GM13977 (cell line): ENCODE measurements at regions of chr10 and their contacts with region 1.

Region 1: DNA sequence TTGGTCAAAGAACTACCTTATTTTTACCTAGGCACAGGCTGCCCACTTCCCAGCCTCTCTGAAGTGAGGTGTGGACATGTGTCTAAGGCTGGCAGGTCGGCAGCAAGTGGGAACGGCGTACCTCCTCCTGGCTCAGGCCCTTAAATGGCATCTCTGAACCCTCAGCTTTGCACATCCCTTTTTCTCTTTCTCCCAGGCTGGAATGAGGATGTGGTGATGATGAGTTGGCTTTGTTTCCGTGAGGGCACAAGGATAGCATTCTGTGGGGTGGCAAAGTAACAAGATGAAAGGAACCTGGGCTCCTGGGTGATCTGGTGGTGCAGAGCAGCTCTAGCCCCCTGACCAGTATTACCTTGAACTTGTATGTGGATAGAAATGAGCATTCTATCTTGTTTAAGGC is 196.8 kb downstream of the REEP3 start:
- DNase-seq: no peak
- CTCF ChIP-seq: no peak

Region 2: DNA sequence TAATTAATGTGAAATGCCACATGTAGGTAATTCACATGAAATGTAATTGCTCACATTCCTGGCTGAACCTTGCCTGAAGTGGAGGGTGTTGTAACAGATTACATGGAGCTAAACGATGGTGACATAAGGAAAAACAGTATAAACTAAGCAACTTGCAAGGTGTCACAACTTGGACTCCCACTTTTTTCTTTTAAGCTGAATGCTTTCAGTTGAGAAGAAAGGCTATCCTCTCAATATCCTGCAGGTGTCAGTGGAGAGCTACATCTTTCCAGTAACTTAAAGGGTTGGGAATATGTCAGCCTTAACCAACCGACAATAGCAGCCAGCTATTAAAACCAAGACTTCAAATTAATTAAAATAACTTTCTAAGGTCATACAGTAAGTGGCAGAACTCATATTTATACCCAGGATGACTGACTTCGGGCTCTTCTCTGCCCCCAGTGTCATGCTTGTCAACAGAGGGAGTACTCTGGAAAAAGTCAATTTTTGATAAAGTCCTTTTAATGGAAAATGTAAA is 551.2 kb before region 1 on chr10:
- in situ Hi-C with region 1: loop called (anchors 5 kb)
- DNase-seq: no peak
- CTCF ChIP-seq: peak; percentile 72

Region 3: GRCh38 chr10:63862860-63863259 is 144.9 kb after region 1 on chr10:
- in situ Hi-C with region 1: no loop called
- DNase-seq: no peak
- CTCF ChIP-seq: no peak